Ovary (tissue), 10 donors: ENCODE measurements at regions of chr6 and their contacts with region 1.

Region 1: DNA sequence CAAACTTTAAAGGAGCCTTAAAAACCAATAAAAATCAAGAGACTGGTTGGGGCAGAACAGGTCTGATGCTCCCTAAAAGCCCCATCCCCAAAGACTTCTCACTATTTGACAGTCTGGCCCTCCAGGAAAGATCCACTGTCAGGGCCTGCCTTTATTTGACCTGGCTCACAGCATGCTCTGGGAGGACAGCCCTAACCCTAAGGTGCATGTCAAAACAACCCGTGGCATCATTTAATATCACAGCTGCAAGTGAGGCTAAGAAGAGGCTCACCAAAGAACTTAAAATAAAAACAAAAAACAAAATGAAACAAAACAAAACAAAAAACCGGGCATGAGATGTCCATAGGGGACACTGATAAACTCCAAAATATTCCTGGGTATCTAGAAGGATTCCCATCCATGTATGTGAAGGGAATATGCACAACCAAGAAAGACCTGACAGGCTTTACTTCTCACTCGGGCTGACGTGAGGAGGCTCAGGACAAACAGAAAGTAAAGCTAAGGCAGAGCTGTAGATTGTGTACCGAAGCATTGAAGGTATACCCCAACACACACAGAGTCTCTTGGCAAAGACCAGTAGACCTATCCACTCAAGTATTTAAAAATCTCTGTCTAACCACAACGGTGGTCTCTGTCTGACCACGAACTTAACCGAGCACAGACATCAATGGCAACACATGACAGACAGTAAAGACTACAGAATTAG is 57.3 kb downstream of the AHI1 start:
- DNase-seq: no peak
- H3K4me3 ChIP-seq: no peak overlapping the region
- H3K27ac ChIP-seq: no peak overlapping the region
- H3K4me1 ChIP-seq: no peaks in the 10 kb centered on the region
- H3K27me3 ChIP-seq: no peaks in the 10 kb centered on the region
- CTCF ChIP-seq: no peak
- EP300 ChIP-seq: no peak
- POLR2A ChIP-seq: no peak

Region 2: GRCh38 chr6:135527116-135527959 is 87.1 kb after region 1 on chr6:
- intact Hi-C with region 1: loop called in 1 of 4 experiments (anchors 5 kb)
- DNase-seq: no peak
- H3K4me3 ChIP-seq: no peak overlapping the region
- H3K27ac ChIP-seq: no peak overlapping the region
- H3K4me1 ChIP-seq: no peaks in the 10 kb centered on the region
- H3K27me3 ChIP-seq: no peaks in the 10 kb centered on the region
- CTCF ChIP-seq: no peak
- EP300 ChIP-seq: no peak
- POLR2A ChIP-seq: no peak